Dendritic cell treated with granulocyte-macrophage colony-stimulating factor and Interleukin-4, amounts not matched to agents 40 ng/mL and 50 ng/mL, for 4 days (primary cell): ENCODE measurements at regions of chr7 and their contacts with region 1.

Region 1: GRCh38 chr7:142060936-142061335 is 50.6 kb upstream of the MGAM2 start:
- H3K4me3 Mint-ChIP-seq: no peak overlapping the region
- H3K27ac Mint-ChIP-seq: no peak overlapping the region
- H3K4me1 Mint-ChIP-seq: no peaks in the 10 kb centered on the region
- H3K27me3 Mint-ChIP-seq: peaks cover 3% of the 10 kb centered on the region

Region 2: DNA sequence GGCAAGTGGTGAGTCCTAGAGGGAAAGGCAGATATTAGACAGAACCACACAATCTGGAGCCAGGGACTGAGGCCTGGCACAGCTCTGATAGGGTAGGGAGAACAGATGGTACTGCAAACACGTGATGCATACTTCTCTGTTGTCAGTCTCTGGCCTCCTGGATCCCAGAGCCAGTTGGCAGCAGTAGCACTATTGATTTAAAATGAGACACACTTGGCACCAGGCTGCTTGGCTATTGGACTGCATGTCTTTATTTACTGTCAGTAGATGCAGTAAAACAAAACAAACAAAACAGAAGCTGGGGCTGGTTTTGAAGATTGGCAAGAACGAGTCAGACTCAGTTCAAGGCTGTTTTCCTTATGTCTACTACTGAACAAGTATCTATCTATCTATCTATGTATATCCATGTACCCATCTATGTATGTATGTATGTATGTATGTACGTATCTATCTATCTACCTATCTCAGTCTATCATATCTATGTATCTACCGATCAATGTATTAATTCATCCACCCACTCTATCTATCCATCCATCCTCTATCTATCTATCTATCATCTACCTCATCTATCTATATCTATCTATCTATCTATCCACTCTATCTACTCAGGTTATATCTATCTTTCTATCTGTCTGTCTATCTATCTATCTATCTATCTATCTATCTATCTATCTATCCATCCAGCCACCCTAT is 27.2 kb after region 1 on chr7:
- intact Hi-C with region 1: loop called (anchors 1 kb)
- H3K4me3 Mint-ChIP-seq: no peak overlapping the region
- H3K27ac Mint-ChIP-seq: no peak overlapping the region
- H3K4me1 Mint-ChIP-seq: no peaks in the 10 kb centered on the region
- H3K27me3 Mint-ChIP-seq: no peaks in the 10 kb centered on the region

Region 3: GRCh38 chr7:142158736-142159496 is 98.0 kb after region 1 on chr7:
- intact Hi-C with region 1: no loop called
- H3K4me3 Mint-ChIP-seq: no peak overlapping the region
- H3K27ac Mint-ChIP-seq: no peak overlapping the region
- H3K4me1 Mint-ChIP-seq: no peaks in the 10 kb centered on the region
- H3K27me3 Mint-ChIP-seq: peaks cover 2% of the 10 kb centered on the region